PC-3 (cell line): ENCODE measurements at regions of chr15 and their contacts with region 1.

Region 1: DNA sequence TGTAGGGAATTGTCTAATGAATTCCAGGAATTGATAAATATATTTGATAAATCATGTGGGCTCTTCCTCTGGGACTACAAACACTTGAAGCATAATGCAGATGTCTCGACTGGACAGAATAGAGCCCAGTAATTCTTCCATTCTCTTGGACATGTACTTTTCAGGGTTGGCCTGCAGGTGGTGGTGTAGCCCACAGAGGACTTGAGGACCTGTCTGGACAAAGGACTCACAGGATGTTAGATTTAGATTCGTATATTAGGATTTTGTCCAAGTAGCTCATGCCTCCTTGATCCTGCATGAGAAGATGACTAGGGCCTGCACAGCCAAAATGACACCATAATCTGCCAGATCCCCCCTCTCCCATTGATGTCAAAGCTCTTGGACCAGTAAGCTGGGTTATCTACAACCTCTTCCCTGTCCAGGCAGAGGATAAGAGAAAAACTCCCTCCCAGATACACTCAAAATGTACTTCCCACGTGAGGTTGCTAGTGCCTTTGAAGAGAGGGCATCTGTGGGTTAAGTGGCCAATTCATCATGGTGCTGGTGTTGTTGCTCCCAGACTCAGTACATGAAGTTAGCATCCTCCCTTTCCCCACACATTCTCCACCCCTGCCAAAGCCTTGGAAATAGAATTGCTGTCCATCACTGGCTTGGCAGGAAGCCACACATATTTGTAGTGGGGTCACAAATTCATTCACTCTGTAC is 88.6 kb upstream of the ZNF280D start:
- DNase-seq: peak; percentile 69
- ATAC-seq: peak; percentile 83
- H3K4me3 ChIP-seq: no peak overlapping the region
- H3K27ac ChIP-seq: no peak overlapping the region
- H3K4me1 ChIP-seq: peaks cover 11% of the 10 kb centered on the region
- H3K27me3 ChIP-seq: no peaks in the 10 kb centered on the region
- CTCF ChIP-seq: peak; percentile 77

Region 2: GRCh38 chr15:56886932-56887781 is 65.3 kb after region 1 on chr15:
- CTCF ChIA-PET with region 1: no interaction called
- POLR2A ChIA-PET with region 1: no interaction called
- intact Hi-C with region 1: loop called (anchors 1 kb)
- DNase-seq: peak; percentile 90
- ATAC-seq: peak; percentile 94
- H3K4me3 ChIP-seq: peak overlapping the region; percentile 82
- H3K27ac ChIP-seq: peak overlapping the region; percentile 87
- H3K4me1 ChIP-seq: peaks cover 14% of the 10 kb centered on the region
- H3K27me3 ChIP-seq: no peaks in the 10 kb centered on the region
- CTCF ChIP-seq: no peak

Region 3: DNA sequence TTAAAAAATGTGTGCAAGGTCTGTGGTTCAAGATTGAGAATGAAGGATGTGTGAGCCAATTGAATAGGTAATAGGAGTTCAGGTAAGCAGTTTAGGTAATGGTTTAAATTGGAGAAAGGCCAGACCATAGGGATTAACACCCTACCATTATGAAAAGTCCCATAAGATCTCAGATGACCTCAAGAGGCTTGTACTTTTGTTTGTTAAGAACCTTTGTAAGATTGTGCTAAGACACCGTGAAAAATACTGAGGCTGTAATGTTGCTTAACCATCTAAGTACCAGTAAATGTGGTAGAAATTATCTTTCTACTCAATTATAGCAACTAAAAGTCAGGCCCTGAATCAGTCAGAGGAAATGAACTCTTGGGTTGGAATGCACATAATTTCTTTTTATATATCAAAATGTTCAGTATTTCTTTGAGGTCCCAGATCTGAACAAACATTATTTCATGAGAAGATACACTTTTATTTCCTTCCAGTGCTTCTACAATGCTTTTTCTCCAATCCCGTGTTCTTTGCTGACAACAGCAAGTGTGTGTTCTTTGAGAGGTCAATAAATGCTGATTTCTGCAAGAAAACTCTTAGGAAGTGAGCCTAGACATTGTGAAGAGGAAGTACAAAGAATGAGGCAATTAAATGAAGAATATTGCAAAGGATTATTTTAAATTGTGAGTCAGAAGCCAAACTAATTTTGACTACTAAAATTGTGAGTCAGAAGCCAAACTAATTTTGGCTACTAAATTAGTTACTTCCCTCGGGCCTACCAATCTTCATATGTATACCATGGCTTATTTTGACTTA is 163.0 kb after region 1 on chr15:
- CTCF ChIA-PET with region 1: no interaction called
- POLR2A ChIA-PET with region 1: interaction called, 4 read pairs
- intact Hi-C with region 1: loop called (anchors 10 kb)
- DNase-seq: peak; percentile 50
- ATAC-seq: peak; percentile 75
- H3K4me3 ChIP-seq: no peak overlapping the region
- H3K27ac ChIP-seq: peak overlapping the region; percentile 59
- H3K4me1 ChIP-seq: peaks cover 43% of the 10 kb centered on the region
- H3K27me3 ChIP-seq: no peaks in the 10 kb centered on the region
- CTCF ChIP-seq: no peak

Region 4: GRCh38 chr15:57138349-57138788 is 316.5 kb after region 1 on chr15:
- CTCF ChIA-PET with region 1: interaction called, 5 read pairs
- POLR2A ChIA-PET with region 1: no interaction called
- intact Hi-C with region 1: loop called (anchors 5 kb)
- DNase-seq: peak; percentile 66
- ATAC-seq: peak; percentile 67; the same call in 1 of the 2 replicates
- H3K4me3 ChIP-seq: no peak overlapping the region
- H3K27ac ChIP-seq: no peak overlapping the region
- H3K4me1 ChIP-seq: no peaks in the 10 kb centered on the region
- H3K27me3 ChIP-seq: no peaks in the 10 kb centered on the region
- CTCF ChIP-seq: peak; percentile 78

Region 5: GRCh38 chr15:57213862-57214261 is 392.0 kb after region 1 on chr15:
- CTCF ChIA-PET with region 1: interaction called, 3 read pairs
- POLR2A ChIA-PET with region 1: no interaction called
- intact Hi-C with region 1: loop called (anchors 5 kb)
- DNase-seq: peak; percentile 55
- ATAC-seq: peak; percentile 27
- H3K4me3 ChIP-seq: no peak overlapping the region
- H3K27ac ChIP-seq: no peak overlapping the region
- H3K4me1 ChIP-seq: peaks cover 32% of the 10 kb centered on the region
- H3K27me3 ChIP-seq: no peaks in the 10 kb centered on the region
- CTCF ChIP-seq: peak; percentile 66

Region 6: GRCh38 chr15:57306161-57306943 is 484.5 kb after region 1 on chr15:
- CTCF ChIA-PET with region 1: no interaction called
- POLR2A ChIA-PET with region 1: no interaction called
- intact Hi-C with region 1: loop called (anchors 10 kb)
- DNase-seq: peak; percentile 66
- ATAC-seq: peak; percentile 76
- H3K4me3 ChIP-seq: peak overlapping the region; percentile 57; the same call in 1 of the 2 replicates
- H3K27ac ChIP-seq: no peak overlapping the region
- H3K4me1 ChIP-seq: peaks cover 12% of the 10 kb centered on the region
- H3K27me3 ChIP-seq: no peaks in the 10 kb centered on the region
- CTCF ChIP-seq: peak; percentile 77